ENCODE measurements at regions of chr19 and their contacts with region 1.

Region 1: GRCh38 chr19:39671738-39672363 is 16.1 kb downstream of the LGALS16 start:
- DNase-seq: peak in 8 of 9 donors; percentile 32 to 73 (median 66)
- ATAC-seq: peak; percentile 79
- H3K4me3 ChIP-seq: no peak overlapping the region
- H3K4me3 Mint-ChIP-seq: peak overlapping the region in 7 of 10 donors; percentile 29 to 64 (median 36)
- H3K27ac ChIP-seq: no peak overlapping the region
- H3K27ac Mint-ChIP-seq: peak overlapping the region in 8 of 9 donors; percentile 24 to 81 (median 60)
- H3K4me1 ChIP-seq: peaks cover 4 to 25% of the 10 kb centered on the region in 2 donors
- H3K4me1 Mint-ChIP-seq: peaks cover 8 to 41% (median 35%) of the 10 kb centered on the region in 7 donors
- H3K27me3 ChIP-seq: no peaks in the 10 kb centered on the region
- H3K27me3 Mint-ChIP-seq: peaks cover 0 to 10% (median 5%) of the 10 kb centered on the region in 5 donors

Region 2: DNA sequence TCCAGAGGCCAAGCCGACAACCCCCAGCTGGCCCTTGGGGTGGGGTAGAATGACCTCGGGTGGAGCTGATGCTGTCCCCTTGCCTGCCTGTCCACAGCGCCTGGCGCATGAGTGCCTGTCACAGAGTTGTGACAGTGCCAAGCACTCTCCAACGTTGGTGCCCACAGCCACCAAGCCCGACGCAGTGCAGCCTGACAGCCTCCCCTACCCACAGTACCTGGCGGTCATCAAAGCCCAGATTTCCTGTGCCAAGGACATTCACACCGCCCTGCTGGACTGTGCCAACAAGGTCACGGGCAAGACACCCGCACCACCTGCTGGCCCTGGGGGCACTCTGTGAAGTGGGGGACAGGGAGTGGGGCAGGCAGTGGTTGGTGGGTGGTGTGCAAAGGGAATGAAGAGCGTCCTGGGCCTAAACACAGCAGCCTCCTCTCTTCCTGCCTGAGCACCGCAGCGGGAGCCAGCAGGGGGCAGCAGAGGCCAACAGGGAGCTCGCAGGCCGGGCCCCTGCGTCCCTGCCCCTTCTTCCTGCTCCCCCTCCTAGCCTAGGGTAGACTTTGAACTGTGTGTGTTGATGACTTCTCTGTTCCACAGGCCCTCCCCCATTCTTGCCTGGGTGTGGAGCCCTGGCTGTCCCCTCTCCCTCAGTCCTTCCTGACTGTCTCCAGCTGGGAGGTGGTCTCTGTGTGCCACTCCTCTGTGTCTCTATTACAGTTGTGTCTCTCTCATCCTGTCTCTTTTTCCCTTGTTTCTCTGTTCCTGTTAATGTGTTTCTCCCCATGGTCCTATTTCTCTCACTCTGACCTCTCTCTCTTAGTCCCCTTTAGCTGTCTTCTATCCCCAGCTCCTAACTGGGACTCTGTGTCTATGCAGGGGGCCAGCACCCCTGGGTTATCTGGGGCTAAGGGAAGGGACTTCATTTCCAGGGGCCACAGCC is 274.2 kb before region 1 on chr19:
- CTCF ChIA-PET with region 1: interaction called, 3 read pairs
- POLR2A ChIA-PET with region 1: no interaction called
- intact Hi-C with region 1: loop called in 1 of 2 experiments (anchors 1 kb)
- DNase-seq: peak; percentile 88 to 97 (median 93)
- ATAC-seq: peak; percentile 71
- H3K4me3 ChIP-seq: peak overlapping the region; percentile 57
- H3K4me3 Mint-ChIP-seq: peak overlapping the region in 9 of 10 donors; percentile 48 to 80 (median 74)
- H3K27ac ChIP-seq: peak overlapping the region; percentile 63
- H3K27ac Mint-ChIP-seq: peak overlapping the region; percentile 84 to 96 (median 93)
- H3K4me1 ChIP-seq: peaks cover 39 to 42% of the 10 kb centered on the region in 2 donors
- H3K4me1 Mint-ChIP-seq: peaks cover 27 to 68% (median 56%) of the 10 kb centered on the region in 7 donors
- H3K27me3 ChIP-seq: no peaks in the 10 kb centered on the region
- H3K27me3 Mint-ChIP-seq: no peaks in the 10 kb centered on the region

Region 3: DNA sequence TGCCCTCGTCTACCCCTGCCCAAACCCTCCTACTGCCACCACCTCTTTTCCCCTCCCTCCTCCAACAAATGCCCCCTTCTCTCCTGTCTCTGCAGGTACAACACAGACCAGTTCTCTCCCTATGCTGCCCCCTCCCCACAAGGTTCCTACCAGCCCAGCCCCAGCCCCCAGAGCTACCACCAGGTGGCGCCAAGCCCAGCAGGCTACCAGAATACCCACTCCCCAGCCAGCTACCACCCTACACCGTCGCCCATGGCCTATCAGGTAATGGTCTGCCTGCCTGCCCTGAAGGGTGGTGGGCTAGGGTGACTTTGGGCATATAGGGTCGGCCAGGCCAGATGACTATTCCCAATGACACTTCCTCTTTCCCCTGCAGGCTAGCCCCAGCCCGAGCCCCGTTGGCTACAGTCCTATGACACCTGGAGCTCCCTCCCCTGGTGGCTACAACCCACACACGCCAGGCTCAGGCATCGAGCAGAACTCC is 197.7 kb before region 1 on chr19:
- CTCF ChIA-PET with region 1: interaction called, 21 read pairs
- POLR2A ChIA-PET with region 1: interaction called, 3 read pairs
- intact Hi-C with region 1: loop called in 1 of 2 experiments (anchors 1 kb)
- DNase-seq: peak; percentile 64 to 80 (median 73)
- ATAC-seq: peak; percentile 88
- H3K4me3 ChIP-seq: no peak overlapping the region
- H3K4me3 Mint-ChIP-seq: no peak overlapping the region
- H3K27ac ChIP-seq: no peak overlapping the region
- H3K27ac Mint-ChIP-seq: peak overlapping the region in 4 of 9 donors; percentile 8 to 59 (median 28)
- H3K4me1 ChIP-seq: no peaks in the 10 kb centered on the region
- H3K4me1 Mint-ChIP-seq: peaks cover 0 to 11% (median 8%) of the 10 kb centered on the region in 7 donors
- H3K27me3 ChIP-seq: no peaks in the 10 kb centered on the region
- H3K27me3 Mint-ChIP-seq: no peaks in the 10 kb centered on the region

Region 4: DNA sequence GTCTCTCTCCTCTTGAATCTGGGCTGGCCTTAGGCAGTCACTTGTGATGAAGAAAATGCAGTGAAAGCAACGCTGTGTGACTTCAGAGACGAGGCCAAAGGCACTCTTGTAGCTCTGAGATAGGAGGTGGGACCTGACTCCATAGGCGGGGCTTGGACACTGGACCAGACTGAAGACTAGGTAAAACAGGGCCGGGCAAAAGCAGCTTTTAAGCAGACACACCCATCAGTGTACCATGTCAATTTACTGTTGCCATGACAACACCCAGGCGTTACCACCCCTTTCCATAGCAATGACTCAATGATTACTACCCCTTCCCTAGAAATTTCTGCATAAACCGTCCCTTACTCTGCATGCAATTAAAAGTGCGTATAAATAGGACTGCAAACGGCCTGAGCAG is 125.3 kb before region 1 on chr19:
- CTCF ChIA-PET with region 1: interaction called, 45 read pairs
- POLR2A ChIA-PET with region 1: interaction called, 5 read pairs
- intact Hi-C with region 1: loop called (anchors 1 kb)
- DNase-seq: no peak
- ATAC-seq: no peak
- H3K4me3 ChIP-seq: no peak overlapping the region
- H3K4me3 Mint-ChIP-seq: peak overlapping the region in 5 of 10 donors; percentile 15 to 55 (median 43)
- H3K27ac ChIP-seq: no peak overlapping the region
- H3K27ac Mint-ChIP-seq: peak overlapping the region in 8 of 9 donors; percentile 28 to 83 (median 70)
- H3K4me1 ChIP-seq: peaks cover 5 to 35% of the 10 kb centered on the region in 2 donors
- H3K4me1 Mint-ChIP-seq: peaks cover 24 to 58% (median 48%) of the 10 kb centered on the region in 7 donors
- H3K27me3 ChIP-seq: no peaks in the 10 kb centered on the region
- H3K27me3 Mint-ChIP-seq: peaks cover 0 to 4% (median 0%) of the 10 kb centered on the region in 5 donors

Region 5: GRCh38 chr19:39631178-39631577 is 40.7 kb before region 1 on chr19:
- CTCF ChIA-PET with region 1: no interaction called
- POLR2A ChIA-PET with region 1: no interaction called
- intact Hi-C with region 1: no loop called
- DNase-seq: no peak
- ATAC-seq: no peak
- H3K4me3 ChIP-seq: no peak overlapping the region
- H3K4me3 Mint-ChIP-seq: no peak overlapping the region
- H3K27ac ChIP-seq: no peak overlapping the region
- H3K27ac Mint-ChIP-seq: no peak overlapping the region
- H3K4me1 ChIP-seq: no peaks in the 10 kb centered on the region
- H3K4me1 Mint-ChIP-seq: peaks cover 0 to 2% (median 0%) of the 10 kb centered on the region in 7 donors
- H3K27me3 ChIP-seq: peaks cover 0 to 3% of the 10 kb centered on the region in 2 donors
- H3K27me3 Mint-ChIP-seq: peaks cover 12 to 26% (median 20%) of the 10 kb centered on the region in 5 donors

Region 6: GRCh38 chr19:39765091-39766076 is 93.5 kb after region 1 on chr19:
- CTCF ChIA-PET with region 1: interaction called, 11 read pairs
- POLR2A ChIA-PET with region 1: no interaction called
- intact Hi-C with region 1: loop called (anchors 1 to 5 kb)
- DNase-seq: peak in 4 of 9 donors; percentile 4 to 33 (median 11)
- ATAC-seq: no peak
- H3K4me3 ChIP-seq: no peak overlapping the region
- H3K4me3 Mint-ChIP-seq: peak overlapping the region in 1 of 10 donors; percentile 14
- H3K27ac ChIP-seq: no peak overlapping the region
- H3K27ac Mint-ChIP-seq: peak overlapping the region in 1 of 9 donors; percentile 14
- H3K4me1 ChIP-seq: no peaks in the 10 kb centered on the region
- H3K4me1 Mint-ChIP-seq: peaks cover 0 to 4% (median 0%) of the 10 kb centered on the region in 7 donors
- H3K27me3 ChIP-seq: no peaks in the 10 kb centered on the region
- H3K27me3 Mint-ChIP-seq: peaks cover 0 to 15% (median 4%) of the 10 kb centered on the region in 5 donors

Measured in naive thymus-derived CD4-positive, alpha-beta T cell (primary cell).